SK-N-SH (cell line): ENCODE measurements at regions of chr15 and their contacts with region 1.

Region 1: DNA sequence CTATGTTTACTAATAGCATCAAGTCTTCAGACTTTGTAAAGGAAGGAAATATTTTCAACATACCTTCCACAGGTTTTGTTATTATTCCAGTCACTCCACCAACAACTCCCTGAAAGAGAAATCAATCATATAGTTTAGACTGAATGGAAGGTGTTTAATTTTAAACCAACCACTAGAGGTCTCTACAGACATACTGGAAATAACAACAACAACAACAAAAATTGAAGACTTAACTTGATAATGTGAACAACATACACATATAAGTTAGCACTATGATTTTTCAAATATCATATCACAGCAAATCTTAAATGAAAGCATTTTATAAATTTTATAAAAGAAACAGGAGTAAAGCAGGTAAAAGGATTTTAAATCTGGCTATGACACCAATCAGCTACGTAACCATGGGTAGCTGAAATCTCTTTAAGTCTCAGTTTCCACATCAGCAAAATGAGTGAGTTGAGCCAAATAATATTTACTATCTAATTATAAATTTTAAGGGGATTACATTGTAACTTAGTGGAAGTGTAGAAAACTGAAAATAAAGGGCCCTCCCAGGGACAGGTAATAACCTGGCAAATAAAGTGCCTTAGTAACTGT is 188.2 kb downstream of the VPS13C start:
- DNase-seq: peak; percentile 11
- H3K4me3 ChIP-seq: no peak overlapping the region
- H3K27ac ChIP-seq: no peak overlapping the region
- H3K4me1 ChIP-seq: no peaks in the 10 kb centered on the region
- H3K27me3 ChIP-seq: no peaks in the 10 kb centered on the region
- CTCF ChIP-seq: peak; percentile 80
- EP300 ChIP-seq: no peak
- RAD21 ChIP-seq: peak; percentile 79

Region 2: GRCh38 chr15:62060113-62060895 is 188.3 kb after region 1 on chr15 and contains the start of gene VPS13C:
- CTCF ChIA-PET with region 1: interaction called, 10 read pairs
- POLR2A ChIA-PET with region 1: no interaction called
- DNase-seq: peak; percentile 98
- H3K4me3 ChIP-seq: peak within 1 kb of the TSS; percentile 74 to 92
- H3K27ac ChIP-seq: peak within 1 kb of the TSS; percentile 76 to 91
- H3K4me1 ChIP-seq: peaks cover 0 to 7% of the 10 kb centered on the region in 2 experiments; a peak in 2 of 4 replicates
- H3K27me3 ChIP-seq: no peaks in the 10 kb centered on the region
- CTCF ChIP-seq: peak; percentile 75
- EP300 ChIP-seq: 0 out of 4 replicates have a peak, but pooled peaks of 1 of the 2 experiments have one; percentile 12
- RAD21 ChIP-seq: peak; percentile 66
- polyA plus RNA-seq, gene VPS13C: 5.7 and 6.9 TPM in 2 replicates